ENCODE measurements at regions of chr14 and their contacts with region 1.

Region 1: GRCh38 chr14:24310646-24311604 is at the start of gene LTB4R:
- DNase-seq: peak; percentile 73 to 79 (median 77)
- H3K4me3 ChIP-seq: peak within 1 kb of the TSS; percentile 55 to 58
- H3K4me3 Mint-ChIP-seq: peak within 1 kb of the TSS; percentile 83 to 94 (median 88)
- H3K27ac ChIP-seq: peak within 1 kb of the TSS; percentile 72
- H3K27ac Mint-ChIP-seq: peak within 1 kb of the TSS; percentile 90 to 97 (median 95)
- H3K4me1 ChIP-seq: peaks cover 71% of the 10 kb centered on the region
- H3K4me1 Mint-ChIP-seq: peaks cover 58 to 89% (median 72%) of the 10 kb centered on the region in 4 donors
- H3K27me3 ChIP-seq: no peaks in the 10 kb centered on the region
- H3K27me3 Mint-ChIP-seq: no peaks in the 10 kb centered on the region
- total RNA-seq, gene LTB4R: 19.5 to 20.0 TPM

Region 2: GRCh38 chr14:24146978-24147760 is 163.8 kb before region 1 on chr14 and contains the start of gene RNF31:
- CTCF ChIA-PET with region 1: interaction called, 8 read pairs
- POLR2A ChIA-PET with region 1: interaction called, 12 read pairs
- intact Hi-C with region 1: no loop called
- DNase-seq: peak; percentile 95 to 99 (median 97)
- H3K4me3 ChIP-seq: peak within 1 kb of the TSS; percentile 85 to 99
- H3K4me3 Mint-ChIP-seq: peak within 1 kb of the TSS; percentile 97 to 100 (median 98)
- H3K27ac ChIP-seq: peak within 1 kb of the TSS; percentile 92
- H3K27ac Mint-ChIP-seq: peak within 1 kb of the TSS; percentile 95 to 99 (median 98)
- H3K4me1 ChIP-seq: peaks cover 63% of the 10 kb centered on the region
- H3K4me1 Mint-ChIP-seq: peaks cover 32 to 80% (median 54%) of the 10 kb centered on the region in 4 donors
- H3K27me3 ChIP-seq: no peaks in the 10 kb centered on the region
- H3K27me3 Mint-ChIP-seq: no peaks in the 10 kb centered on the region
- total RNA-seq, gene RNF31: 108 to 113 TPM

Region 3: GRCh38 chr14:24271134-24271833 is 39.6 kb before region 1 on chr14 and contains the start of gene RABGGTA:
- CTCF ChIA-PET with region 1: interaction called, 45 read pairs
- POLR2A ChIA-PET with region 1: interaction called, 82 read pairs
- intact Hi-C with region 1: loop called (anchors 1 kb)
- DNase-seq: peak; percentile 95 to 98 (median 97)
- H3K4me3 ChIP-seq: peak within 1 kb of the TSS; percentile 86 to 91
- H3K4me3 Mint-ChIP-seq: peak within 1 kb of the TSS; percentile 90 to 95 (median 91)
- H3K27ac ChIP-seq: peak within 1 kb of the TSS; percentile 94
- H3K27ac Mint-ChIP-seq: peak within 1 kb of the TSS; percentile 91 to 100 (median 99)
- H3K4me1 ChIP-seq: peaks cover 33% of the 10 kb centered on the region
- H3K4me1 Mint-ChIP-seq: peaks cover 24 to 46% (median 39%) of the 10 kb centered on the region in 4 donors
- H3K27me3 ChIP-seq: no peaks in the 10 kb centered on the region
- H3K27me3 Mint-ChIP-seq: no peaks in the 10 kb centered on the region
- total RNA-seq, gene RABGGTA: 55.6 to 62.5 TPM

Region 4: GRCh38 chr14:24289649-24290249 is 21.2 kb before region 1 on chr14:
- CTCF ChIA-PET with region 1: interaction called, 152 read pairs
- POLR2A ChIA-PET with region 1: interaction called, 3 read pairs
- intact Hi-C with region 1: no loop called
- DNase-seq: peak in 2 of 5 donors; percentile 18 to 68
- H3K4me3 ChIP-seq: no peak overlapping the region
- H3K4me3 Mint-ChIP-seq: no peak overlapping the region
- H3K27ac ChIP-seq: no peak overlapping the region
- H3K27ac Mint-ChIP-seq: peak overlapping the region in 2 of 7 donors; percentile 6 to 46
- H3K4me1 ChIP-seq: peaks cover 12% of the 10 kb centered on the region
- H3K4me1 Mint-ChIP-seq: peaks cover 0 to 20% (median 6%) of the 10 kb centered on the region in 4 donors
- H3K27me3 ChIP-seq: no peaks in the 10 kb centered on the region
- H3K27me3 Mint-ChIP-seq: no peaks in the 10 kb centered on the region

Region 5: GRCh38 chr14:24324024-24324423 is 13.1 kb after region 1 on chr14:
- CTCF ChIA-PET with region 1: interaction called, 232 read pairs
- POLR2A ChIA-PET with region 1: interaction called, 75 read pairs
- intact Hi-C with region 1: no loop called
- DNase-seq: no peak
- H3K4me3 ChIP-seq: no peak overlapping the region
- H3K4me3 Mint-ChIP-seq: no peak overlapping the region
- H3K27ac ChIP-seq: no peak overlapping the region
- H3K27ac Mint-ChIP-seq: peak overlapping the region in 1 of 7 donors; percentile 15
- H3K4me1 ChIP-seq: peaks cover 14% of the 10 kb centered on the region
- H3K4me1 Mint-ChIP-seq: peaks cover 9 to 30% (median 14%) of the 10 kb centered on the region in 4 donors
- H3K27me3 ChIP-seq: no peaks in the 10 kb centered on the region
- H3K27me3 Mint-ChIP-seq: peaks cover 0 to 1% of the 10 kb centered on the region in 2 donors

Region 6: GRCh38 chr14:24481622-24482324 is 170.8 kb after region 1 on chr14:
- CTCF ChIA-PET with region 1: no interaction called
- POLR2A ChIA-PET with region 1: no interaction called
- intact Hi-C with region 1: no loop called
- DNase-seq: peak in 4 of 5 donors; percentile 18 to 38 (median 25)
- H3K4me3 ChIP-seq: no peak overlapping the region
- H3K4me3 Mint-ChIP-seq: peak overlapping the region in 5 of 8 donors; percentile 38 to 61 (median 51)
- H3K27ac ChIP-seq: no peak overlapping the region
- H3K27ac Mint-ChIP-seq: peak overlapping the region in 4 of 7 donors; percentile 4 to 57 (median 26)
- H3K4me1 ChIP-seq: peaks cover 17% of the 10 kb centered on the region
- H3K4me1 Mint-ChIP-seq: peaks cover 0 to 29% (median 20%) of the 10 kb centered on the region in 4 donors
- H3K27me3 ChIP-seq: no peaks in the 10 kb centered on the region
- H3K27me3 Mint-ChIP-seq: no peaks in the 10 kb centered on the region

Region 7: GRCh38 chr14:24605435-24606190 is 294.7 kb after region 1 on chr14:
- CTCF ChIA-PET with region 1: no interaction called
- POLR2A ChIA-PET with region 1: no interaction called
- intact Hi-C with region 1: no loop called
- DNase-seq: peak; percentile 41 to 51 (median 50)
- H3K4me3 ChIP-seq: no peak overlapping the region
- H3K4me3 Mint-ChIP-seq: peak overlapping the region in 2 of 8 donors; percentile 36 to 59
- H3K27ac ChIP-seq: no peak overlapping the region
- H3K27ac Mint-ChIP-seq: peak overlapping the region in 4 of 7 donors; percentile 35 to 64 (median 57)
- H3K4me1 ChIP-seq: peaks cover 19% of the 10 kb centered on the region
- H3K4me1 Mint-ChIP-seq: peaks cover 10 to 29% (median 17%) of the 10 kb centered on the region in 4 donors
- H3K27me3 ChIP-seq: peaks cover 4% of the 10 kb centered on the region
- H3K27me3 Mint-ChIP-seq: peaks cover 2 to 5% of the 10 kb centered on the region in 2 donors